ENCODE measurements at regions of chr17 and their contacts with region 1.

Region 1: DNA sequence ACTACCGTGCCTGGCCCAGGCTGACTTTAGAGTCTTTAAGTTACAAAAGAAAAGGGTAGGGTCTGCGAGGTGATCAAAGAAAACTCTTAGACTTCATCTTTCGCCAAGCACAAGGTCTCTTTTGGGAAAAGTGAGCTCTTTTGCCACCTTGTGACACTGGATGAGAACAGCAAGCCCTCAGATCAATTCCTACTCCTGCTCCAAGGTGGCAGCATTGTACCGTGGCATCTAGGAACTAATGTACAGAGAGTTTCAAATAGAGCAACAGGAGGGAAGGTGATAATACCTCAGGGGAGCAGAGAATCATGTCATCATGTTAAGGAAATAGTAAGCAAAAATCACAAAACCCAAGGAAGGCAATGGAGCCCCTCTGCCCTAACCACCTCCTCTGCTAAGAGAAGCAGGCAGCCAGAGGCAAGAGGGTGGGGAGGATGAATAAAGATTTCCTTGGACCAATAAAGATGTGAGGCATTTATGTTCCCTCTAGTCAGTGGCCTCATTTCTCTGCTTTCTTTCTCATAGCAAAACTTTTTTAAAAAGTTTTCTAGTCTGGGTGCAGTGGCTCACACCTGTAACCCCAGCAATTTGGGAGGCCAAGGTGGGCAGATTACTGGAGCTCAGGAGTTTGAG is 2.1 kb upstream of the C17orf78 start:
- DNase-seq: peak; percentile 42
- H3K4me3 ChIP-seq: no peak overlapping the region
- CTCF ChIP-seq: peak; percentile 99

Region 2: GRCh38 chr17:37358830-37359681 is 14.6 kb before region 1 on chr17:
- CTCF ChIA-PET with region 1: interaction called, 44 read pairs
- POLR2A ChIA-PET with region 1: no interaction called
- DNase-seq: no peak
- H3K4me3 ChIP-seq: peak overlapping the region; percentile 73
- CTCF ChIP-seq: peak; percentile 32

Region 3: GRCh38 chr17:37399404-37399803 is 25.8 kb after region 1 on chr17:
- CTCF ChIA-PET with region 1: interaction called, 189 read pairs
- POLR2A ChIA-PET with region 1: no interaction called
- DNase-seq: no peak
- H3K4me3 ChIP-seq: no peak overlapping the region
- CTCF ChIP-seq: no peak

Region 4: DNA sequence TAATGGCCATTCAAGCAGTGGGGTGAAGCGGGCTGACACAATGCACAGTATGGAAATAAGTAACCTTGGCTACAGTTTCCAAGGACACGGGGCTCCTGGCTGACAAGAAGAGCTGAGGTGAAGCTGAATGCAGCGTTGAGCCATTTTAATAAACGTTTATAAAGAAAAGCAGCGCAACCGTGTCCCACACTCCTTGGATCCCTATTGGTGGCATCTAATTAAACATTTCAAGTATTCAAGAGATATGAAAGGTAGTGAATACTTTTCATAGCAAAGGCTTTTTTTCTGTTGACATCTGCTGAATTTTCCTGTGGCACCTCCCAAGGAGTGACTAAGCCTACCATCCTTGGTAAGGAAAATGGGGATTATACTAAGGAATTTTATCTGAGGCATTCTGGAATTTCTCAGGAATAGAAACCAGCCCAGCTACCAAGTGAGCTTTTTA is 142.5 kb after region 1 on chr17:
- CTCF ChIA-PET with region 1: interaction called, 20 read pairs
- POLR2A ChIA-PET with region 1: no interaction called
- DNase-seq: no peak
- H3K4me3 ChIP-seq: no peak overlapping the region
- CTCF ChIP-seq: no peak

Region 5: DNA sequence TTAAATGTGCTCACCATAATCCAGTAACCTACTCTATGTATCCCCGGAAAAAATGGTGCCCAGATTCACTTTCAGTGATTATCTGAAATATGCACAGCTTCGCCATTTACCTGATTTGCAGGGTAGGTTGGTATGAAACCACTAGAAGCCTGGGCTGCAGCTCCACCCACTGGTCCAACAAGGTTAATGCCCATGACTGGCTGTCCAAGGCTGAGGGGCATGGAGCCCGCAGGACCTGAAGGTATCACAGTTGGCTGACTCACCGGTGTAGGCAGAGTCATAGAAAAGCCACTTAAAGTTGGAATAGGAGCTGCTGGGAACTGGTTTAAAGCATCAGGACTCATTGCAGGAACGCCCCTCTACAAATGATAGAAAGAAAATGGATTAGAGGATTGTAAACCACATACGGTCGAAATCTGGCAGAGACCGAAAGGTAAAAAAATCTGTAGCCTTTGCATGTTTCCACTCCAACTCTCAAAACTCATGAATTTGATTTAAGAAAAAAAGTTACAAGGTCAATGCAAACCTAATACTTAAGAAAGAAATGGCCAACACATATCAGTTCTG is 197.0 kb after region 1 on chr17:
- CTCF ChIA-PET with region 1: interaction called, 25 read pairs
- POLR2A ChIA-PET with region 1: no interaction called
- DNase-seq: no peak
- H3K4me3 ChIP-seq: no peak overlapping the region
- CTCF ChIP-seq: peak; percentile 62

Measured in AG04449 (cell line).